ENCODE measurements at regions of chr3 and their contacts with region 1.

Region 1: GRCh38 chr3:94137377-94137776 is 74.5 kb downstream of the NSUN3 start:
- DNase-seq: no peak
- ATAC-seq: no peak
- H3K4me3 ChIP-seq: no peak overlapping the region
- H3K27ac ChIP-seq: no peak overlapping the region
- H3K4me1 ChIP-seq: no peaks in the 10 kb centered on the region
- H3K27me3 ChIP-seq: no peaks in the 10 kb centered on the region
- CTCF ChIP-seq: no peak

Region 2: GRCh38 chr3:94101851-94102250 is 35.5 kb before region 1 on chr3:
- CTCF ChIA-PET with region 1: interaction called, 10 read pairs
- POLR2A ChIA-PET with region 1: no interaction called
- in situ Hi-C with region 1: no loop called
- intact Hi-C with region 1: no loop called
- DNase-seq: peak; percentile 2
- ATAC-seq: no peak
- H3K4me3 ChIP-seq: no peak overlapping the region
- H3K27ac ChIP-seq: no peak overlapping the region
- H3K4me1 ChIP-seq: no peaks in the 10 kb centered on the region
- H3K27me3 ChIP-seq: no peaks in the 10 kb centered on the region
- CTCF ChIP-seq: peak; percentile 41; the same call in 1 of the 2 replicates

Region 3: GRCh38 chr3:94234177-94234788 is 96.9 kb after region 1 on chr3:
- CTCF ChIA-PET with region 1: no interaction called
- POLR2A ChIA-PET with region 1: interaction called, 22 read pairs
- in situ Hi-C with region 1: no loop called
- intact Hi-C with region 1: loop called (anchors 10 kb)
- DNase-seq: peak; percentile 2
- ATAC-seq: peak; percentile 83
- H3K4me3 ChIP-seq: no peak overlapping the region
- H3K27ac ChIP-seq: no peak overlapping the region
- H3K4me1 ChIP-seq: no peaks in the 10 kb centered on the region
- H3K27me3 ChIP-seq: no peaks in the 10 kb centered on the region
- CTCF ChIP-seq: peak; percentile 78

Measured in Panc1 (cell line).